ENCODE measurements at regions of chr15 and their contacts with region 1.

Region 1: DNA sequence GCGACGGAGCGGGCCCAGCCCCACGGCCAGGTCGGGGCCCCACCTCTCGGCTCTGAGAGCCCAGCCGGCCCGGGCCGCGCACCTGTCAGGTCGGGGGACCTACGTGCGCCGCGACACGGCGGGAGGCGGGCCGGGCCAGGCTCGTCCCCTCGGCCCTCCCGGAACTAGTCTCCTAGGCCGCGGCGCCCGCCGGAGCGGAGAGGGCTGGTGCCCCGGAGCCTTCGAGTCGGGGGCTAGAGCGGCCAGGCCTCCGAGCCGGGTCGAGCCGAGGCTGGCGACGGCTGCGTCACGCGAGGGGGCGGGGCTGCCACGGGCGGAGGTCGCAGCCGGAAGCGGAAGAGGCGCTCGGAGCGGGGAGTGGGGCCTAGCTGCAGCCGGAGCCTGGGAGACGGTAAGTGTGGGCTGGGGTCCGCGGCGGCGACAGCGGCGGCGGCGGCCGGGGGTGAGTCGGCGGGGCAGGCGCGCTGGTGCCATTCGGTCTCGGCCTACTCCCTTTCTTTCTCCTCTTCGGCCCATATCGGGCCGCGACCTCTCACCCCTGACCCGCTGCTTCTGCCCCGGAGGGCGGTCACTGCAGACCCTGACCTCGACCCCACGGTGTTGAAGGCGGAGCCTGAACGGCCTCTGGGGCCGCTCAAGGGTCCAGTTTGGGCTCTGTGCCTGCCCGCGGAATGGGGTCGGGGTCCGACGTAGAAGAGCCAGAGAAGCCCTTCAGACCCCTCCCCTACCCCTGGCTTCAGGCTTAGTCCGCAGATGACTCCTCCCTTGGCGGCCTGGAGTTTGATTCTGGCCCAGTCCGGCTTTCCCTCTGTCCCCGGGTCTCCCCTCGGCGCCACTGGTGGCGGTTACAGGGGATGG is at the start of gene CLK3:
- DNase-seq: peak; percentile 93 to 97 (median 94)
- ATAC-seq: peak; percentile 94
- H3K4me3 ChIP-seq: peak within 1 kb of the TSS; percentile 89
- H3K27ac ChIP-seq: peak within 1 kb of the TSS; percentile 84
- H3K4me1 ChIP-seq: peaks cover 19 to 49% of the 10 kb centered on the region in 2 experiments
- H3K27me3 ChIP-seq: no peaks in the 10 kb centered on the region; a peak in 1 of 5 replicates
- CTCF ChIP-seq: no peak
- EP300 ChIP-seq: no peak
- POLR2A ChIP-seq: peak; percentile 70
- RAD21 ChIP-seq: 0 out of 4 replicates have a peak, but pooled peaks of 1 of the 2 experiments have one; percentile 25
- polyA plus RNA-seq, gene CLK3: 1.2 to 6.9 TPM

Region 2: GRCh38 chr15:74373731-74374647 is 241.7 kb before region 1 on chr15:
- CTCF ChIA-PET with region 1: interaction called, 3 read pairs
- POLR2A ChIA-PET with region 1: no interaction called
- in situ Hi-C with region 1: no loop called
- intact Hi-C with region 1: loop called (anchors 5 kb)
- DNase-seq: peak; percentile 95 to 100 (median 100)
- ATAC-seq: peak; percentile 99
- H3K4me3 ChIP-seq: peak overlapping the region; percentile 41
- H3K27ac ChIP-seq: peak overlapping the region; percentile 12; the same call in 1 of the 3 replicates
- H3K4me1 ChIP-seq: peaks cover 16 to 20% of the 10 kb centered on the region in 2 experiments
- H3K27me3 ChIP-seq: peaks cover 9 to 10% of the 10 kb centered on the region in 2 experiments; a peak in 3 of 5 replicates
- CTCF ChIP-seq: peak; percentile 91 to 95 (median 93)
- EP300 ChIP-seq: no peak
- POLR2A ChIP-seq: no peak
- RAD21 ChIP-seq: peak; percentile 93 to 94

Region 3: GRCh38 chr15:74540761-74541493 is 74.8 kb before region 1 on chr15 and contains the start of gene ARID3B:
- CTCF ChIA-PET with region 1: no interaction called
- POLR2A ChIA-PET with region 1: interaction called, 8 read pairs
- in situ Hi-C with region 1: loop called (anchors 5 kb)
- intact Hi-C with region 1: loop called (anchors 1 kb)
- DNase-seq: peak; percentile 95 to 98 (median 96)
- ATAC-seq: peak; percentile 96
- H3K4me3 ChIP-seq: peak within 1 kb of the TSS; percentile 92
- H3K27ac ChIP-seq: peak within 1 kb of the TSS; percentile 100
- H3K4me1 ChIP-seq: peaks cover 20 to 26% of the 10 kb centered on the region in 2 experiments
- H3K27me3 ChIP-seq: no peaks in the 10 kb centered on the region
- CTCF ChIP-seq: no peak
- EP300 ChIP-seq: 0 out of 2 replicates have a peak, but pooled peaks have one; percentile 12
- POLR2A ChIP-seq: peak; percentile 98
- RAD21 ChIP-seq: no peak
- polyA plus RNA-seq, gene ARID3B: 0.32 to 0.74 TPM

Region 4: GRCh38 chr15:74598126-74598842 is 17.5 kb before region 1 on chr15:
- CTCF ChIA-PET with region 1: no interaction called
- POLR2A ChIA-PET with region 1: interaction called, 111 read pairs
- in situ Hi-C with region 1: no loop called
- intact Hi-C with region 1: no loop called
- DNase-seq: peak; percentile 95 to 100 (median 100)
- ATAC-seq: peak; percentile 99
- H3K4me3 ChIP-seq: peak overlapping the region; percentile 46
- H3K27ac ChIP-seq: peak overlapping the region; percentile 74
- H3K4me1 ChIP-seq: peaks cover 11 to 37% of the 10 kb centered on the region in 2 experiments; a peak in 4 of 5 replicates
- H3K27me3 ChIP-seq: no peaks in the 10 kb centered on the region
- CTCF ChIP-seq: no peak
- EP300 ChIP-seq: no peak
- POLR2A ChIP-seq: peak; percentile 94
- RAD21 ChIP-seq: no peak

Region 5: DNA sequence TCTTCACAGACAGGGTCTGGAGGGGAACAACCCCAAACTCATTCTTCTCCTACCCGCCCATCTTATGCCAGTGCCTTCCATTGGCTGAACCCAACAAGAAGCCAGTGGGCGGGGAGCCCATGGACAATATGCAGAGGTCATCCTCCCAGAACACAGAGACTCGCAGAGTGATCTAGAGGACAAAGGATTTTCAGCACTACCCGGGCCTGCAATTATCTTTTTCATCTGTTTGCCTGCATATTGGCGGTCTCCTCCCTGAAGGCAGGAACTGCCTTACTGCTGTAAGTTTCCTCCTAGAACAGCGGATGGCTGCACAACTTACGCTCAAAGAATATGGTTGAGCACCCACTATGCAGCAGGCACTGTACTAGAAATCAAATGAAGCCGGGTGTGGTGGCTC is 124.2 kb after region 1 on chr15:
- CTCF ChIA-PET with region 1: no interaction called
- POLR2A ChIA-PET with region 1: no interaction called
- in situ Hi-C with region 1: no loop called
- intact Hi-C with region 1: no loop called
- DNase-seq: no peak
- ATAC-seq: no peak
- H3K4me3 ChIP-seq: no peak overlapping the region
- H3K27ac ChIP-seq: no peak overlapping the region
- H3K4me1 ChIP-seq: no peaks in the 10 kb centered on the region
- H3K27me3 ChIP-seq: peaks cover 22 to 35% of the 10 kb centered on the region in 2 experiments; a peak in 4 of 5 replicates
- CTCF ChIP-seq: no peak
- EP300 ChIP-seq: no peak
- POLR2A ChIP-seq: no peak
- RAD21 ChIP-seq: no peak